Activated CD4-positive, alpha-beta memory T cell treated with anti-CD3 and anti-CD28 coated beads for 36 hours (primary cell): ENCODE measurements at regions of chr13 and their contacts with region 1.

Region 1: GRCh38 chr13:46595136-46595886 is 42.3 kb downstream of the LRCH1 start:
- DNase-seq: no peak
- H3K4me3 Mint-ChIP-seq: no peak overlapping the region
- H3K27ac Mint-ChIP-seq: no peak overlapping the region
- H3K4me1 Mint-ChIP-seq: peaks cover 76% of the 10 kb centered on the region
- H3K27me3 Mint-ChIP-seq: no peaks in the 10 kb centered on the region

Region 2: DNA sequence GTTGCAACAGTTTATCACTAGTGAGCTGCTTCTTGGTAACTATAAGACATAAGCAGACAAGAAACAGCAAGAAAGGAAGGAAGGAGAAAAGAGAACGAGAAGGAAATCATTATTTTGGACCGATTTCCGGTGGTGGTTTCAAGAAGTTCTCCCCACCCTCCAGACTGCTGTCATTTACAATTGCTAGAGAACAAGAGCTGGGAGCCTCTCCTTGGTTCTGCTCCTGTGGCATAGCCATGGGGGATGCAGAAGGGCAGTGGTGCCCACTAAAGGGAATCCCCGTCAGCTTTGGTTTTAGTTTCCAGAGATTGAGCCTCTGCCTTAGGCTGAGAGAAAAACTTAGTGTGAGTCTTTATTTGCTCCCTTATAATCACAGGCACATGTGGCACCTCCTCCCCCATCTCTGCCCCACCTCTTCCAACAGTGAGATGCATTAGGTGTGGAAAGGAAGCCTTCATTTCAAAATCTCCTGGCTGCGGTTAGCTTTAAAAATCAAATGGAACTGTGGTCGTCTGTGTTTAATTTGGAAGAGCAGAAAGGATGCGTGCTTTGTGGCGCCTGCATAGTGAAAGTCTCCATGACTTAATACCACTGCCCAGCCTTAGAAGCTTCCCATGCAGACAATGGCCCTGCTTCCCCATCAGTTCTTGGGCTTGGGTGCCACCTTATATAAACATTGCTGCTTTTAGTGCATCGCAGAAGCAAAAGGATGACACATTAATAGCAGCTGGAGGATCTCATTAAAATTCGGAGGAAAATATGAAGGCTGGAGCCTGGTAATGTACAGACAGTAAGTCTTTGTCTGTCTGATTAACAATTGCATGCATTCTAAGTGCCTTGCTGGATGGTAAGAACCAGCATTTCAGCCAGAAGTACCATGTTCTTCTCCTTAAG is 17.4 kb before region 1 on chr13:
- CTCF ChIA-PET with region 1: no interaction called
- POLR2A ChIA-PET with region 1: interaction called, 3 read pairs
- intact Hi-C with region 1: loop called (anchors 1 kb)
- DNase-seq: no peak
- H3K4me3 Mint-ChIP-seq: no peak overlapping the region
- H3K27ac Mint-ChIP-seq: peak overlapping the region; percentile 35
- H3K4me1 Mint-ChIP-seq: peaks cover 62% of the 10 kb centered on the region
- H3K27me3 Mint-ChIP-seq: no peaks in the 10 kb centered on the region

Region 3: GRCh38 chr13:46605825-46606554 is 10.7 kb after region 1 on chr13:
- CTCF ChIA-PET with region 1: no interaction called
- POLR2A ChIA-PET with region 1: no interaction called
- intact Hi-C with region 1: loop called (anchors 2 kb)
- DNase-seq: no peak
- H3K4me3 Mint-ChIP-seq: no peak overlapping the region
- H3K27ac Mint-ChIP-seq: no peak overlapping the region
- H3K4me1 Mint-ChIP-seq: peaks cover 59% of the 10 kb centered on the region
- H3K27me3 Mint-ChIP-seq: no peaks in the 10 kb centered on the region

Region 4: DNA sequence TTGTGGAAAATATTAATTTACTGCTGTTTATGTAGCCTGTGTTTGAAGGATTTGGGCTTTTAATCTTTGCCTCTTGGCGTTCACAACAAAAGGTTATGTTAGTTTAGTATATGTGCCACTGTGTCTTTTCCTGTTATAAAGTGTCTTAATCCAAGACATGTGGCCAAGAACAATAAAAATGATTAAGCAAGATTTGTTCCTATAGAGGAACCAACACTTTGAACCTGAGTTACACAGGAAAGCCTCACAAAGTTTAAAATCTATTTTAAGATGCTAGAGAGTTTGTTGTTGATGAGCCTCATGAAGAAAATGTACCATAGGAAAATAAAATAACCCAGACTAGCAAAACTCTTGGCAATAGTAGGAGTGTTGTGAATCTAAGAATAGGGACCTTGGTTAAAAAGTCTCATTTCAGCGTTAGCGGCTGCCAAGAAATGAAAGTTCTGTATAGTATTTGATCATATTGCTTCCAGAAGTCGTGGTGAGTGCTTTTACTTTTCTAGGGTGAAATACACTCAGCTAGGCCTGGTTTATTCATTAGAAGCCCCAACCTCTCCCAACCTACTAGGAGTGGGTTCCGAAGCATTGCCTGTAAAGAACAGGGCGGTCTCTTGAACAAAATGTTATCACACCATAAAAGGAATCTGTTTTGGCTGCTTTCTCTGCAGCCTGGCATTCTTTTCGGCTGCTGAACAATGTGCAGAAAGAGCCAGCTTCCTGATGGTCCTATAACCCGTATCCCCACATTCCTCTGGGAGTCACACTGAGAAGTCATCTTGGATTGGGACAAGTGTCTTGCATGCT is 60.3 kb after region 1 on chr13:
- CTCF ChIA-PET with region 1: no interaction called
- POLR2A ChIA-PET with region 1: no interaction called
- intact Hi-C with region 1: loop called (anchors 2 kb)
- DNase-seq: no peak
- H3K4me3 Mint-ChIP-seq: no peak overlapping the region
- H3K27ac Mint-ChIP-seq: no peak overlapping the region
- H3K4me1 Mint-ChIP-seq: peaks cover 20% of the 10 kb centered on the region
- H3K27me3 Mint-ChIP-seq: no peaks in the 10 kb centered on the region

Region 5: DNA sequence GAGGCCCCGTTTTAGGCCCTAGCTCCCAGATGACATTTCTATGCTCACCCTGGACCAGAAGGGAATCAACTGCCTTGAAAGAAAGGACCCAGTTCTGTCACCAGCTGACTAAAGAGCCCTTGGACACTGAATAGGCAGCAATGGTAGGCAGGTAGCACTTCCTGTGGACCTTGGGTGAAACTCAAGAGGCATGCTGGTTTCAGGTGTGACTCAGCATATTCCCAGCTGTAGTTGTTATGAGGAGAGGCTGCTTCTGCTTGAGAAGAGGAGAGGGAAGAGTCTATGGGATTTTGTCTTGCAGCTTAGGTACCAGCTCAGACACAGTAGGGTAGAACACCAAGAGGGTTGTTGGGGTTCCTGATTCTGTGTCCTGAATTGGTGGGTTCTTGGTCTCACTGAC is 339.4 kb after region 1 on chr13:
- CTCF ChIA-PET with region 1: no interaction called
- POLR2A ChIA-PET with region 1: no interaction called
- intact Hi-C with region 1: no loop called
- DNase-seq: no peak
- H3K4me3 Mint-ChIP-seq: no peak overlapping the region
- H3K27ac Mint-ChIP-seq: no peak overlapping the region
- H3K4me1 Mint-ChIP-seq: no peaks in the 10 kb centered on the region
- H3K27me3 Mint-ChIP-seq: peaks cover 9% of the 10 kb centered on the region

Region 6: DNA sequence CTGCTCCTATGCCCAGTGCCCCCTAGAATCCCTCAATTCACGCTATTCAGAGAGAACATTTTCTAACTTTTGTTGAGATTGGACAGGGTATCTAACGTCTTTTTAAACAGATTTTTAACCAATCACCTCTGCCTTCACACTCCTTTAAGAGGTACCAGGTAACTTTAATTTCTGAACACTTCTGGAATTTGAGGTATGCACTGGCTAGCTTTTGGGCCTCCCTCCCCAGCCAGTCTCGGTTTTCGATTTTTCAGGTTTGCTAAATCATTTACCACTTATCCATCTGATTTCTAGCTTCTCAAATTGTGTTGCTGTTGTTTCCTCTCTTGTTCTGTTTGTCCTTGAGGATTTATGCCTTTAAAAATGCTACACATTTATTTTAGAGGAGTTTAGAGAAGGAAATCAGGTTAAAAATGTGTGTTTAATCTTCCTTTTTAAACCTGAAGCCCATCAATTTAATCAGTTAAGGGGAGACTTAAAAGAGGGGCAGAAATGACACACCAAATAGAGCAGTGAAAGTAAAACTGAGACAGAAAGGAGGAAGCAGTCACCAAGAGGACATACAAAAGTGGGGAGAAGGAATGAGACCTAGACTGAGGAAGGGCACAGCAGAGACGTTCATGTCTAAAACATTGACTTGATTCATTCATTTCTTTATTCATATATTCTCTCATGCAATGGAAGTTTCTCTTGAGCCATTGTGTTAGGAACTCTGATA is 441.1 kb after region 1 on chr13:
- CTCF ChIA-PET with region 1: no interaction called
- POLR2A ChIA-PET with region 1: no interaction called
- intact Hi-C with region 1: no loop called
- DNase-seq: no peak
- H3K4me3 Mint-ChIP-seq: no peak overlapping the region
- H3K27ac Mint-ChIP-seq: no peak overlapping the region
- H3K4me1 Mint-ChIP-seq: no peaks in the 10 kb centered on the region
- H3K27me3 Mint-ChIP-seq: no peaks in the 10 kb centered on the region